ENCODE measurements at regions of chr2 and their contacts with region 1.

Region 1: DNA sequence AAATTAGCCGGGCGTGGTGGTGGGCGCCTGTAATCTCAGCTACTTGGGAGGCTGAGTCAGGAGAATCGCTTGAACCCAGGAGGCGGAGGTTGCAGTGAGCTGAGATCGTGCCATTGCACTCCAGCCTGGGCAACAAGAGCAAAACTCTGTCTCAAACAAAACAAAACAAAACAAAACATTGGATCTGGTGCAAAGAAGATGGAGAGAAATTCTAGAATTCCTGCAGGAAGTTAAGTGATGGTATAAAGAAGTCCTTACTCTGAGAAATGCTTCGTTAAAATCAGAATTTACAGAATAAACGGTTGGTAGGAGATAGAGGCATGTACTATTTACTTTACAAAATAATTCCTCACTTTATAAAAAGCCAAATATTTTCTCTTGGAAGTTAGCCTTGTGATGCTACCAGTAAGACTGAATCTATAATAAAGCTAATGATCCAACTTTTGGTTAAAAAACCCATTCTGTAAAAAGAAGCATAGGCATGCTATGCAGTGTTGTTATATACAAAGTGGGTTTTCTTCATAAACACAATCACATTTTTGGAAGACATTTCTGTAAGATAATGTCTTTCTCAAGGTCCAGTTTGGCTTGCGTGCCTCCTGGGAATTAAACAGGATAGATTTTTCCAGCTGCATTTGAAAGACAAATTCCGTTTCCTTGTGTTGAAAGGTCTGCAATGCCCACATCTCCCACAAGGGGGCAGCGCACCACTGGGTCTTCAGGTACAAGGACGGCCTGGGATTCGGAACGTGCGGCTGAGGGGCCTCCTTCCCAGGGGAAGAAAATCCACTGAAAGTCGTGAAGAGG is 35.6 kb upstream of the PNO1 start:
- DNase-seq: peak; percentile 63 to 92 (median 68)
- ATAC-seq: peak; percentile 43; the same call in 2 of the 3 replicates
- H3K4me3 ChIP-seq: no peak overlapping the region
- H3K27ac ChIP-seq: no peak overlapping the region
- H3K4me1 ChIP-seq: peaks cover 5 to 31% of the 10 kb centered on the region in 2 experiments; a peak in 4 of 5 replicates
- H3K27me3 ChIP-seq: no peaks in the 10 kb centered on the region
- CTCF ChIP-seq: peak; percentile 87 to 98 (median 92)
- EP300 ChIP-seq: no peak
- POLR2A ChIP-seq: no peak
- RAD21 ChIP-seq: peak; percentile 93

Region 2: DNA sequence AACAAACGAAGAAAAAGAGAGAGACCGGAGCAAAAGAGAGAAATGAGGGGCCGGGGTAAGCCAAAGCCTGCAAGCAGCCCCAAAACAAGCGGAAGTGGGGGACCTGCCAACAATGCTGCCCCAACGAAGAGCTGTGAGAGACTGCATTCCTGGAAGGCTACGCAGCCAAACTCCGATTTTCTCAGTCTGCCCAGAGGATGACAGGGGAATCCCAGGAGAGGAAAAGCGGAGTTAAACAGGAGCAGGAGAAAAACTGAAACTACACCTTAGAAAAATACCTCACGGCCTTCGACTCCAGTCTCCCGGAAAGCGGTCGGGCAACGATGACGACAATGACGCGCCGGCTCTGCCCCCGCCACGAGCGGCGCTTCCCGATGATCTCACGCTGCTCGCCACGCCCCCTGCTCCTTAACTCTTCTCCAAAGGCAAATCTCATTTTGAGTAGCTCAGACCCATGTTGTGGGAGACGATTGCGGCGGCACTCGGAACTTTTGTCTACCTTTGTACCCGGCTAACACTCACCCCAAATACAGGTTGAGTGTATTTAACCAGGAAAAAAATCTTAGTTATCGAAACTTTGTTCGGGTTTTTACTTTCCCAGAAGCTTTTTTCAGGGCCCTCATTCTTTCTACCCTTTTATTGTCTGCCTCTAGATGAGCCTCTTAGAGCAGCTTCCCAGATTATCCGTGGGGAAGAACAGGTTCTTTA is 59.2 kb before region 1 on chr2 and contains the start of gene C1D:
- CTCF ChIA-PET with region 1: no interaction called
- POLR2A ChIA-PET with region 1: interaction called, 5 read pairs
- in situ Hi-C with region 1: no loop called
- intact Hi-C with region 1: loop called (anchors 5 kb)
- DNase-seq: peak; percentile 90 to 97 (median 91)
- ATAC-seq: peak; percentile 92
- H3K4me3 ChIP-seq: peak within 1 kb of the TSS; percentile 60
- H3K27ac ChIP-seq: peak within 1 kb of the TSS; percentile 82
- H3K4me1 ChIP-seq: peaks cover 11 to 13% of the 10 kb centered on the region in 2 experiments
- H3K27me3 ChIP-seq: no peaks in the 10 kb centered on the region
- CTCF ChIP-seq: no peak; a peak in 1 of 6 replicates
- EP300 ChIP-seq: no peak
- POLR2A ChIP-seq: peak; percentile 91
- RAD21 ChIP-seq: no peak
- polyA plus RNA-seq, gene C1D: 120 to 123 TPM

Region 3: GRCh38 chr2:68185541-68186164 is 63.6 kb after region 1 on chr2:
- CTCF ChIA-PET with region 1: interaction called, 4 read pairs
- POLR2A ChIA-PET with region 1: no interaction called
- in situ Hi-C with region 1: no loop called
- intact Hi-C with region 1: loop called (anchors 1 kb)
- DNase-seq: peak; percentile 47 to 81 (median 54)
- ATAC-seq: peak; percentile 86
- H3K4me3 ChIP-seq: no peak overlapping the region
- H3K27ac ChIP-seq: no peak overlapping the region
- H3K4me1 ChIP-seq: no peaks in the 10 kb centered on the region; a peak in 1 of 5 replicates
- H3K27me3 ChIP-seq: no peaks in the 10 kb centered on the region
- CTCF ChIP-seq: peak; percentile 69 to 81 (median 76)
- EP300 ChIP-seq: no peak
- POLR2A ChIP-seq: no peak
- RAD21 ChIP-seq: peak in 1 of 2 experiments; percentile 43; a peak in 2 of 4 replicates

Region 4: DNA sequence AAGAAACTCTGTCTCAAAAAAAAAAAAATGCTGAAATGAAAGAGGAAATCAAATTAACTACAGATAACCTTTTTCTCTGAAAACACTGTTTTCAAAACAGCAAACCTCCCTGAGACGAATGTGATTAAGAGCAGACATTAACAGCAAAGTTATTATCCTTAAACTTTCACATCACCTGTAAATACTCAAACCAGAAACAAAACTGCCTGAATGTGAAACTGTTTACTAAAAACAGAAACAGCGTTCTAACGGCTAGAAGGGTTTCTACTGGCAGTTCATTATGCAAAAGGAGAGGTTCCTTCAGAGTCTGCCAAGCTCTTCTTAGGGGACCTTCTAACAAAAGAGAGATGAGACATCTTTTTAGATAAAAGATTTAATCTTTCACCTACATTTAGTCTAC is 81.5 kb after region 1 on chr2:
- CTCF ChIA-PET with region 1: no interaction called
- POLR2A ChIA-PET with region 1: no interaction called
- in situ Hi-C with region 1: no loop called
- intact Hi-C with region 1: no loop called
- DNase-seq: no peak
- ATAC-seq: no peak
- H3K4me3 ChIP-seq: no peak overlapping the region
- H3K27ac ChIP-seq: no peak overlapping the region
- H3K4me1 ChIP-seq: peaks cover 8 to 14% of the 10 kb centered on the region in 2 experiments; a peak in 2 of 5 replicates
- H3K27me3 ChIP-seq: no peaks in the 10 kb centered on the region
- CTCF ChIP-seq: no peak
- EP300 ChIP-seq: no peak
- POLR2A ChIP-seq: no peak
- RAD21 ChIP-seq: no peak

Region 5: GRCh38 chr2:68244456-68244855 is 122.4 kb after region 1 on chr2:
- CTCF ChIA-PET with region 1: interaction called, 10 read pairs
- POLR2A ChIA-PET with region 1: interaction called, 3 read pairs
- in situ Hi-C with region 1: no loop called
- intact Hi-C with region 1: loop called (anchors 1 kb)
- DNase-seq: no peak
- ATAC-seq: no peak
- H3K4me3 ChIP-seq: no peak overlapping the region
- H3K27ac ChIP-seq: no peak overlapping the region
- H3K4me1 ChIP-seq: peaks cover 7 to 37% of the 10 kb centered on the region in 2 experiments; a peak in 4 of 5 replicates
- H3K27me3 ChIP-seq: no peaks in the 10 kb centered on the region
- CTCF ChIP-seq: peak in 2 of 3 experiments; percentile 18 to 33; a peak in 2 of 6 replicates
- EP300 ChIP-seq: no peak
- POLR2A ChIP-seq: no peak
- RAD21 ChIP-seq: peak; percentile 19 to 50; a peak in 3 of 4 replicates

Region 6: GRCh38 chr2:68290901-68291300 is 168.8 kb after region 1 on chr2:
- CTCF ChIA-PET with region 1: interaction called, 23 read pairs
- POLR2A ChIA-PET with region 1: no interaction called
- in situ Hi-C with region 1: no loop called
- intact Hi-C with region 1: loop called (anchors 1 kb)
- DNase-seq: no peak
- ATAC-seq: peak; percentile 6; the same call in 1 of the 3 replicates
- H3K4me3 ChIP-seq: no peak overlapping the region
- H3K27ac ChIP-seq: no peak overlapping the region
- H3K4me1 ChIP-seq: peaks cover 14 to 34% of the 10 kb centered on the region in 2 experiments
- H3K27me3 ChIP-seq: no peaks in the 10 kb centered on the region
- CTCF ChIP-seq: no peak
- EP300 ChIP-seq: no peak
- POLR2A ChIP-seq: no peak
- RAD21 ChIP-seq: no peak

Region 7: DNA sequence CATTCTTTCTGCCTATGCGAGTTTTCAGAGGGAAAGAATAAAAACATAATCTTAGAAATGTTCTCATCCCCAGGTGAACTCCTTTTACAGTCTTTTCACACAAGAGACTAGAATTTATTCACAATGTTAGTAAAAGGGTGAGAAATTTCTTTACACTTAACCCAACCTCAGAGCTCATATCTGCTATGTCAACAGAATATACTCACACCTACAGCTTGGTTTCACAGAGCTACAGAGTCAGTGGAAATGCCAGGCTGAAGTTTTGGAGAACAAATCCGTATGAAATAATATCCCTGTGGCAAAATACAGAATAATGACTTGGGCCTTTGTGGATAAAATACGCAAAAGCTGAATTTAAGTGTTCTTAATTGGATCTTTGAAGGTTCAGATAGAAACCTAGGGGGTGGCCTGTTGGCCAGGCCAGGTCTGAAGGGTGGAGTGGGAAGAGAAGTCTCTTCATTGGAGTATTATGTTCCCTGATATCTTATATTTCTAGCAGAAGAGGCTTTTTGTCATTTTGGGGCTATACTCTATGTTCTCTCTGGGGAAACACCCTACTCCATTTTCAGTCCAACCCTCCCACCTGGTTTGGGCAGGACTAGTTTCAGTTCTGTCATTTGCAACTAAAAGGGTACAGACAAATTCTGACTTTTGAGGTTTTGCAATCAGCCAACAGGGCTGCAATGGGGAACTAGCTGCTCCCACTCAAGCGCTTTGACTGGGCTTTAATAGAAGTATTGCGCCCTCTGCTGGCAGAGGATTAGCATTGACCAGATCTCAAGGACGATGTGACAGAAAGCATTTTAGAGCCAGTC is 319.3 kb after region 1 on chr2:
- CTCF ChIA-PET with region 1: interaction called, 9 read pairs
- POLR2A ChIA-PET with region 1: no interaction called
- in situ Hi-C with region 1: loop called (anchors 5 kb)
- intact Hi-C with region 1: loop called (anchors 1 kb)
- DNase-seq: peak; percentile 67 to 95 (median 72)
- ATAC-seq: peak; percentile 94
- H3K4me3 ChIP-seq: no peak overlapping the region
- H3K27ac ChIP-seq: peak overlapping the region; percentile 53; the same call in 2 of the 3 replicates
- H3K4me1 ChIP-seq: peaks cover 4 to 29% of the 10 kb centered on the region in 2 experiments; a peak in 4 of 5 replicates
- H3K27me3 ChIP-seq: no peaks in the 10 kb centered on the region
- CTCF ChIP-seq: peak; percentile 88 to 97 (median 96)
- EP300 ChIP-seq: peak; percentile 56; the same call in 1 of the 2 replicates
- POLR2A ChIP-seq: no peak
- RAD21 ChIP-seq: peak; percentile 99

Region 8: GRCh38 chr2:68487773-68488355 is 365.8 kb after region 1 on chr2:
- CTCF ChIA-PET with region 1: no interaction called
- POLR2A ChIA-PET with region 1: no interaction called
- in situ Hi-C with region 1: no loop called
- intact Hi-C with region 1: no loop called
- DNase-seq: peak; percentile 11 to 44 (median 24)
- ATAC-seq: peak; percentile 72
- H3K4me3 ChIP-seq: no peak overlapping the region
- H3K27ac ChIP-seq: no peak overlapping the region
- H3K4me1 ChIP-seq: no peaks in the 10 kb centered on the region
- H3K27me3 ChIP-seq: no peaks in the 10 kb centered on the region
- CTCF ChIP-seq: peak in 2 of 3 experiments; percentile 33 to 76; a peak in 4 of 6 replicates
- EP300 ChIP-seq: no peak
- POLR2A ChIP-seq: no peak
- RAD21 ChIP-seq: peak; percentile 72 to 89

Measured in K562 (cell line).